Esophagus muscularis mucosa (tissue), 4 donors: ENCODE measurements at regions of chr15 and their contacts with region 1.

Region 1: DNA sequence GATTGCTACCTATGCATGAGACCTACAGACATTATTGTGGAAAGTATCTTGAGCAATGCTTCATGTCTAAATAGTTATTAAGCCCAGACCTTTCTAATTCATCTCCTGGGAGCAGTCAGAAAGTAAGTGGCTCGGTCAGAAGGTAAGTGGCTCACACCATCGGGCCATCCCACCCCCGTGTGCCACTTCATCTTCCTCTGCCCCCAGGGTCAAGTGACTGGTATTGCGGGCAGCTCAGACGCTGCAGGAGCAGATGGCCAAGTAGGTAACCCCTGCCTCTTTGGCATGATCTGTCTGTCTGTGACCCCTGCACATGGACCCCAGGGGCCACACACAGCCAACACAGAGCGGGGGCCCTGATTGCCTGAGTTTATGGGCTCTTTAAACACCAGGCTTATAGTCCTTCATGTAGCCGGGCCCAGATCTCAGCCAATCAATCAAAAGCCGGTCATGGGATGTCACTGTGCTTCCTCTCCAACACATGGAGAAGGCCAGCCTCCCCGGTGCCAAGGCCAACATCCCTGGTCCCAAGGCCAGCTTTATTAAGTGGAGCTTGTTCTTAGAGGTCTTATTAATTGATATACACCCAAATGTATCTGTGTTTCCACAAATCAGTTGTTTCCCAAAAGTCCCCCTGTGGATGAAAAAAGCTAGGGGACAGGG is 42.9 kb downstream of the LARP6 start:
- DNase-seq: no peak
- H3K4me3 ChIP-seq: no peak overlapping the region
- H3K27ac ChIP-seq: no peak overlapping the region
- H3K4me1 ChIP-seq: peaks cover 0 to 10% (median 8%) of the 10 kb centered on the region in 4 donors
- H3K27me3 ChIP-seq: no peaks in the 10 kb centered on the region
- CTCF ChIP-seq: no peak
- EP300 ChIP-seq: no peak
- POLR2A ChIP-seq: no peak

Region 2: GRCh38 chr15:70271422-70272088 is 539.5 kb before region 1 on chr15:
- intact Hi-C with region 1: no loop called
- DNase-seq: no peak
- H3K4me3 ChIP-seq: no peak overlapping the region
- H3K27ac ChIP-seq: peak overlapping the region; percentile 35 to 72 (median 48)
- H3K4me1 ChIP-seq: peaks cover 38 to 45% (median 42%) of the 10 kb centered on the region in 4 donors
- H3K27me3 ChIP-seq: no peaks in the 10 kb centered on the region
- CTCF ChIP-seq: no peak
- EP300 ChIP-seq: no peak
- POLR2A ChIP-seq: no peak

Region 3: DNA sequence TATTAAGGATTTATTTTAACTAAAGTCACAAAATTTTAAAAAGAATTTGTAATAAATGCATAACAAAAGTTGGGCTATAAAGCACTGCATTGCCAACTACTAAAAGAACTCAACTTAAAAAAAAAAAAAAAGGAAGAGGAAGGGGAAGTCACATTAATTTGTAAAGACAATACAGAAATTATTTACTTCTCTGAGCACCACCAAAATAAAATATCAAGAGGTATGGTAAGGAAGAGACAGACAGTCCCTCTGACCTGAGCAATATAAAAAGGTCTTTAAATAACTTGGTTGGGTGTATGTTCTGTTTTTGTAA is 131.2 kb before region 1 on chr15:
- intact Hi-C with region 1: loop called (anchors 2 kb)
- DNase-seq: no peak
- H3K4me3 ChIP-seq: no peak overlapping the region
- H3K27ac ChIP-seq: no peak overlapping the region
- H3K4me1 ChIP-seq: peaks cover 0 to 16% (median 9%) of the 10 kb centered on the region in 4 donors
- H3K27me3 ChIP-seq: no peaks in the 10 kb centered on the region
- CTCF ChIP-seq: no peak
- EP300 ChIP-seq: no peak
- POLR2A ChIP-seq: no peak

Region 4: GRCh38 chr15:70722266-70723121 is 88.6 kb before region 1 on chr15:
- intact Hi-C with region 1: loop called (anchors 5 kb)
- DNase-seq: no peak
- H3K4me3 ChIP-seq: no peak overlapping the region
- H3K27ac ChIP-seq: no peak overlapping the region
- H3K4me1 ChIP-seq: peaks cover 24 to 43% (median 34%) of the 10 kb centered on the region in 4 donors
- H3K27me3 ChIP-seq: no peaks in the 10 kb centered on the region
- CTCF ChIP-seq: peak; percentile 78 to 82 (median 79)
- EP300 ChIP-seq: no peak
- POLR2A ChIP-seq: no peak

Region 5: DNA sequence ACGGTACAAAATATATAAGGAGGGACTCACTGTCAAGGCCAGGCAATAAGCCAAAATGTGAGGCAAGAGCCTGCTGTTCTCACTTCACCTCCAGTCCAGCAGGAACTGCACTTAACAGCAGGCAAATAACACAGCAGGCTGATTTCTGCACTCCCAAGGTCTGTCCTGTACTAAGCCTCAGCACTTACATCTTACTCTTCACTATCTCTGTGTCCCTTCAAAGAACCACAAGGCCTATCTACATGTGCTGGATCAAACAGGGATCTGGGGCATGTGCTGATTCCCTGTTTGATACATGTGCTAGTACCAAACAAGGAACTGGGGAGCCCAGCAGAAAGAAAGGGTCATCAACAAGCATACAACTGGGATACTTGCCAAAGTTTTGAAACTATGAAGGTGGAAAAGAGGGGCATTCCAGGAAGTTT is 69.9 kb before region 1 on chr15:
- intact Hi-C with region 1: no loop called
- DNase-seq: no peak
- H3K4me3 ChIP-seq: no peak overlapping the region
- H3K27ac ChIP-seq: peak overlapping the region; percentile 71 to 74 (median 74)
- H3K4me1 ChIP-seq: peaks cover 32 to 44% (median 34%) of the 10 kb centered on the region in 4 donors
- H3K27me3 ChIP-seq: no peaks in the 10 kb centered on the region
- CTCF ChIP-seq: no peak
- EP300 ChIP-seq: no peak
- POLR2A ChIP-seq: no peak

Region 6: DNA sequence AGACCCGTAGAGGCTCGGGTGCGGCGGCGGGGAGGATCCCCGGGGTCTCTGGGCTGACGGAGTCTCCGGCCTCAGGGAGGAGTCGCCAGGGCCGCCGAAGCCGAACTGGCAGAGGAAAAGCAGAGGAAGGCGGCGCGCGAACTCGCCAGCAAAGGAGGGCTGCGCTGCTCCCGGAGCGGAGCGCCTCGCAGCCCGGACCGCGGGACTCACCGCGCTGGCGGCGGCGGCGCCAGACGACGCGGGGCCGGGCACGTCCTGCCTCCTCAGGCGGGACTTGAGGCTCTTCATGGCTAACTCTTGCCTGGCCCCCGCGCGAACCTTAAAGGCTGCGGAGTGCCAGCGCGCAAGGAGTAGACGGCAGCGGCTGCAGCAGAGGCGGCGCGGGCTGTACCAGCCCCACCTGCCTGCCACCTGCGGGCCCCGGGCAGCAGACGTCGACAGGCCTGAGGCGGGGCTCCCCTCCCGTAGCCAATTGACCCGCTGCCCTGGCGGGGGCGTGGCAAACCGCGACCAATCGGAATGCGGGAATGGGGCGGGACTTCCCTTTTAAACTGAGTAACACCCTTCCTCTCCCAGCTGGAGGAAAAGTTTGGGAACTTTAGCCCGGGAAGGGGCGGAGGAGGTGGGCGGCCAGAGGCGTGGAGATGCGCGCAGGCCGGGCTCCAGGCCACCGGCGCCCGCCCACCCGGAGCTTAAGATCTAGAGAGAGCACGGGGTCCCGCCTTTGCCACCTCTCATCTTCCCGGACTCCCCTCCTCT is 47.7 kb before region 1 on chr15 and contains the start of gene UACA:
- intact Hi-C with region 1: loop called (anchors 5 kb)
- DNase-seq: peak; percentile 99
- H3K4me3 ChIP-seq: peak within 1 kb of the TSS; percentile 75 to 97 (median 91)
- H3K27ac ChIP-seq: peak within 1 kb of the TSS; percentile 90 to 97 (median 96)
- H3K4me1 ChIP-seq: peaks cover 21 to 37% (median 25%) of the 10 kb centered on the region in 4 donors
- H3K27me3 ChIP-seq: no peaks in the 10 kb centered on the region
- CTCF ChIP-seq: peak in 1 of 3 experiments; percentile 7
- EP300 ChIP-seq: no peak
- POLR2A ChIP-seq: peak; percentile 89
- total RNA-seq, gene UACA: 23.9 to 40.7 (median 28.9) TPM